ENCODE measurements at regions of chr11 and their contacts with region 1.

Region 1: DNA sequence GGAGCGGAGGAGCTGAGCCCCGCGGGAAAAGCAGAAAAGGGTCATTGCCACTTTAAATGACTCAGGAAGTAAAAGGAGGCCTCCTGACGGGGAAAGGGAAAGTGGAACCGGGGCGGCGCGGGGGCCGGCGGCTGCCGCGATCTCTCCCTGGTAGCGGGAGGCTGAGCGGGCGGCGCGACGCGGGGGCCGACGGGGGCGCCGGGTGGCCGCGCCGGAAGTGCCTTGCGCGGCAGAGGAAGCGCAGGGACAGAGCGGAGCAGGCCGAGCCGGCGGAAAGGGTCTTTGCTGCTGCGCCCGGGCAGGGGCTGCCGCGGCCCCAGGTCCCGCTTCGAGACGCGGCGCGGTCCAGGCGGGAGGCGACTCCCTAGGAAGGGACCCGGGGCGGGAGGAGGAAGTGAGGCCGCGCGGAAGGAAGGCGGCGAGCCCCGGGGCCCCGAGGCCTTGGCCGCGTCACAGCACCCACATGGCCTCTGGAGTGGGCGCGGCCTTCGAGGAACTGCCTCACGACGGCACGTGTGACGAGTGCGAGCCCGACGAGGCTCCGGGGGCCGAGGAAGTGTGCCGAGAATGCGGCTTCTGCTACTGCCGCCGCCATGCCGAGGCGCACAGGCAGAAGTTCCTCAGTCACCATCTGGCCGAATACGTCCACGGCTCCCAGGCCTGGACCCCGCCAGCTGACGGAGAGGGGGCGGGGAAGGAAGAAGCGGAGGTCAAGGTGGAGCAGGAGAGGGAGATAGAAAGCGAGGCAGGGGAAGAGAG is at the start of gene TRIM44:
- DNase-seq: peak; percentile 77
- ATAC-seq: peak; percentile 82
- H3K4me3 Mint-ChIP-seq: peak within 1 kb of the TSS; percentile 98
- H3K27ac Mint-ChIP-seq: peak within 1 kb of the TSS; percentile 98
- H3K4me1 Mint-ChIP-seq: peaks cover 50% of the 10 kb centered on the region
- H3K27me3 Mint-ChIP-seq: peaks cover 3% of the 10 kb centered on the region
- CTCF ChIP-seq: no peak
- total RNA-seq, gene TRIM44: 66.7 and 67.0 TPM in 2 replicates

Region 2: DNA sequence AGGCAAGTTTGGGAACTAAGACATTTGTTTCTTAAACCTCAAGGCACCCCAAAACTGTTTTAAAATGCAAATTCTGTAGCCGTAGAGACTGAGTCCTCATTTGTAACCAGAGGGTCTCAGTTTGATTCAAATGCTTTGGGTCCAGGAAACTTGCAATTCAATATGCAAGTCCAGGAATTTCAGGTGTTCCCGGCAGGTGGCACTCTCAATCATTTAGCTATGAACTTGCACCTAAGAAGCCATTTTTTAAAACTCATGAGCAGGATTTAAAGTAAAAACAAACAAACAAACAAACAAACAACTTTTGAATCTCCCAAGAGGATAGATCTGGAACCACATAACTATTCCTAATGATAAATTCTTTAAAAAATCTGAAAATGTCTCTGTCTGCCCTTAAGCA is 1296.3 kb before region 1 on chr11:
- CTCF ChIA-PET with region 1: no interaction called
- POLR2A ChIA-PET with region 1: no interaction called
- intact Hi-C with region 1: no loop called
- DNase-seq: no peak
- ATAC-seq: no peak
- H3K4me3 Mint-ChIP-seq: no peak overlapping the region
- H3K27ac Mint-ChIP-seq: no peak overlapping the region
- H3K4me1 Mint-ChIP-seq: peaks cover under 1% of the 10 kb centered on the region
- H3K27me3 Mint-ChIP-seq: peaks cover 20% of the 10 kb centered on the region
- CTCF ChIP-seq: no peak

Region 3: DNA sequence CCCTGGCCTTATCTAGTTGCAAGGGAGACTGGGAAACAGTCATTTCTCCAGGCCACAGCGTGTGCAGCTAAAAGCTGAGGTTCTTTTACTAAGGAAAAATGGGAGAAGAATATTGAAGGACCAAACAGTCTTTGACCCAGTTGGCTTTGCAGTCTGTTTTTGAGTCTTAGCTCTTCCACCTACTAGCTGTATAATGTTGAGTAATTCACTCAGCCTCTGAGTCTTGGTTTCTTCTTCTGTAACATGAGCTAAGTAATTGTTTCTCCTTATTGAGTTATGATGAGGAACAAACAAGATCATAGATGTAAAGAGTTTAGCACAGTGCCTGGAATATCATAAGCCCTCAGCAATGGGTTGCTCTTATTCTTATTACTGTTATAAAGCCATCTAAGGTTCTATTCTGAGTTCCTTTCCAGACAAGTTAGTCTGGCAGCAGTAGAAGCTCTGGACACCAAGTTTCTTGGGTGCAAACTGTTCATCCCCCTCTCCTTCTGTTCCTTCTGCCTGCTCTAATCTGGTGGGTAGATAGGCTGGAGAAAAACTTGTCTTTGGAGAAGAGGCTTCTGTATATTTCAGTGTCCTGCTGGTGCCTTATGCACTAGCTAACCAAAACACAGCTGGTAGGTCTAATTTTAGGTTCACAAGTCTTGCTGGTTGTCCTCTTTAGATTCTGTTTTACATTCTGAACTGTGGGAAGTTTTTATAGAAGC is 13.2 kb after region 1 on chr11:
- CTCF ChIA-PET with region 1: no interaction called
- POLR2A ChIA-PET with region 1: no interaction called
- intact Hi-C with region 1: loop called (anchors 1 kb)
- DNase-seq: no peak
- ATAC-seq: no peak
- H3K4me3 Mint-ChIP-seq: no peak overlapping the region
- H3K27ac Mint-ChIP-seq: peak overlapping the region; percentile 8
- H3K4me1 Mint-ChIP-seq: peaks cover 87% of the 10 kb centered on the region
- H3K27me3 Mint-ChIP-seq: no peaks in the 10 kb centered on the region
- CTCF ChIP-seq: no peak

Region 4: DNA sequence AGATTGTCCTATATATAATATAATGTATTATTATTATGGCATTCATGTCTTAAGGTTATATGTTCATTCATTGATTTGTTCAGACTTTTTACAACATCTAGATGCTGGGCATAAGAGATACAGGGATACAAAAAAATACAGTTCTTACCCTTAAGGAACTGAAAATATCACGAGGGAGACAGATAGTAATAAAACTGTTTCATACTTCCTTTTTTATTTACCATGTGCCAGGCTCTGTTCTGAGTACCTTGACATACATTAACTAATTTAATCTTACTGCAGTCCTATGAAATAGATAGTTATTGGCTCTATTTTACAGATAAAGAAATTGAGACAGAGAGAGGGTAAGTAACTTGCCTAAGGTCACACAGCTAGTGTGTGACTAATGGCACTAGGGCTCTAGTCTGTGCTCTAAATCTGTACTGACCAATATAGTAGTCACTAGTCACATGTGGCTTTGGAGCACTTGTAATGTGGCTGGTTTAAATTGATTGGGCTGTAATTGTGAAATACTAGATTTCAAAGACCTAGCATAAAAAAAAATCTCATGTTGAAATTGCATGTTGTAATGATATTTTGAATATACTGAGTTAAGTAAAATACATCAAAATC is 21.0 kb after region 1 on chr11:
- CTCF ChIA-PET with region 1: no interaction called
- POLR2A ChIA-PET with region 1: interaction called, 4 read pairs
- intact Hi-C with region 1: loop called (anchors 1 kb)
- DNase-seq: no peak
- ATAC-seq: peak; percentile 83
- H3K4me3 Mint-ChIP-seq: no peak overlapping the region
- H3K27ac Mint-ChIP-seq: no peak overlapping the region
- H3K4me1 Mint-ChIP-seq: peaks cover 65% of the 10 kb centered on the region
- H3K27me3 Mint-ChIP-seq: no peaks in the 10 kb centered on the region
- CTCF ChIP-seq: no peak

Region 5: DNA sequence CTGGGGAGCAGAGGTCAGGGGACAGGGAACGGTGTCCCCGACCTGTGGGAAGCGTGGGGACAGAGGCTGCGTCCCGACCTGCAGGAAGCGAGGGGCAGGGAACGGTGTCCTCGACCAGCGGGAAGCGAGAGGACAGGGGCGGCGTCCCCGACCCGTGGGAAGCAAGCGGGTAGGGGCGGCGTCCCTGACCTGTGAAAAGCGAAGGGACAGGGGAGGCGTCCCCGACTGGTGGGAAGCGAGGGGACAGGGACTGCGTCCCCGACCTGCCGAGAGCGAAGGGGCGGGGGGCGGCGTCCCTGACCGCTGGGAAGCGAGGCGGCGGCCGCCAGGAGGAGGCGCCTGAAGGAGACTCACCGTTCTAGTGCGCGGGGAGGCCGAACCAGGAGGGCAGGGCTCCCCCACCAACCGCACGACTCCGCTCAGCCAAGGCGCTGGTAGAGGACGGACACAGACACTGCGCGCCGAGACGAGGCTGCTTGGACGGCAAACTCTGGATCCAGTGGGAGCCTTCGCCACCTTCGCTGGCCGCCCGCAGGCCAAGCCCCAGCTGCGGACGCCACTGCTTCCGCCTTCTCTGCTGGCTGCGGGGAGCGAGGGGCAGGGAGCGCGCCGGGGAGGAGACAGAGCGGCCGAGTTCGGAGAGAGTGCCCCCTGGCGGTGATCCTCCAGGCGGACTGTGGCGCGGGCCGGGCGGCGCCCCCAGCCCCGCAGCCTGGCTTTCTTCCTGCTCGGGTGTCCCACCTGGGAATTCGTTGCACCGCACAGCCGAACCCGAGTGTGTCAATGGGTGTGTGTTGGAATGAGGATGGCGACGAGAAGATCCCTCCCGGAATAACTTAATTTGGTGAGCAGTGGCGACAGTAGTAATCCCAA is 847.1 kb after region 1 on chr11 and contains the start of gene TRAF6:
- CTCF ChIA-PET with region 1: no interaction called
- POLR2A ChIA-PET with region 1: no interaction called
- intact Hi-C with region 1: loop called (anchors 1 kb)
- DNase-seq: peak; percentile 92
- ATAC-seq: peak; percentile 95
- H3K4me3 Mint-ChIP-seq: peak within 1 kb of the TSS; percentile 97
- H3K27ac Mint-ChIP-seq: peak within 1 kb of the TSS; percentile 91
- H3K4me1 Mint-ChIP-seq: peaks cover 19% of the 10 kb centered on the region
- H3K27me3 Mint-ChIP-seq: peaks cover 9% of the 10 kb centered on the region
- CTCF ChIP-seq: peak; percentile 72
- total RNA-seq, gene TRAF6: 16.9 and 19.3 TPM in 2 replicates